PC-9 (cell line): ENCODE measurements at regions of chr22 and their contacts with region 1.

Region 1: DNA sequence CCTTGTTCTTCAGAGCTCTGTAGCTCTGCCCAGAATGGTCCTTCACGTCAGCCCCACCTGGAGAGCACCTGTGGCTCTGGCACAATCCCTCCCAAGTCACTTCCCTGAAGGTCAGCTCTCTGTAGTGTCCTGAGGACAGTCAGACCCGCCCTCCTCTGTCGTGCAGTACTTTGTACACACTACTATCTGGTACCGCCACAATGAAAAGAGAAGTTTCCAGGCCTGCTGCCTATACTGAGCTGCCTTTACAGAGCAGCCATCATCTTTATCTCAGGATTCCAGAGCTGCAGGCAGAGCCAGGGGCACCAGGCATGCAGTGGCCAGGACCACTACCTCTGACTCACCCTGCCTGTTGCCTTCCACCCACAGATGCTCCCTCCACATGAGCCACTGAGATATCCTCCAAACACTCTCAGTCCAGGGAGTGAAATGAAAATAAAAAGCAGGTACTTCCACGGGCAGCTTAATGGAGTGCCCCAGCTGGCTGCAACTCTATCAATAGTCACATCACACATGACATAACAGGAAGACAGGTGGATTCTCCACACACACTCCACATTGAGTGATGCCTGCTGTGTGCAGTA is 7.3 kb downstream of the PACSIN2 start:
- DNase-seq: no peak
- H3K4me3 ChIP-seq: no peak overlapping the region
- H3K27ac ChIP-seq: no peak overlapping the region
- H3K4me1 ChIP-seq: peaks cover 83% of the 10 kb centered on the region
- H3K27me3 ChIP-seq: no peaks in the 10 kb centered on the region
- CTCF ChIP-seq: no peak

Region 2: DNA sequence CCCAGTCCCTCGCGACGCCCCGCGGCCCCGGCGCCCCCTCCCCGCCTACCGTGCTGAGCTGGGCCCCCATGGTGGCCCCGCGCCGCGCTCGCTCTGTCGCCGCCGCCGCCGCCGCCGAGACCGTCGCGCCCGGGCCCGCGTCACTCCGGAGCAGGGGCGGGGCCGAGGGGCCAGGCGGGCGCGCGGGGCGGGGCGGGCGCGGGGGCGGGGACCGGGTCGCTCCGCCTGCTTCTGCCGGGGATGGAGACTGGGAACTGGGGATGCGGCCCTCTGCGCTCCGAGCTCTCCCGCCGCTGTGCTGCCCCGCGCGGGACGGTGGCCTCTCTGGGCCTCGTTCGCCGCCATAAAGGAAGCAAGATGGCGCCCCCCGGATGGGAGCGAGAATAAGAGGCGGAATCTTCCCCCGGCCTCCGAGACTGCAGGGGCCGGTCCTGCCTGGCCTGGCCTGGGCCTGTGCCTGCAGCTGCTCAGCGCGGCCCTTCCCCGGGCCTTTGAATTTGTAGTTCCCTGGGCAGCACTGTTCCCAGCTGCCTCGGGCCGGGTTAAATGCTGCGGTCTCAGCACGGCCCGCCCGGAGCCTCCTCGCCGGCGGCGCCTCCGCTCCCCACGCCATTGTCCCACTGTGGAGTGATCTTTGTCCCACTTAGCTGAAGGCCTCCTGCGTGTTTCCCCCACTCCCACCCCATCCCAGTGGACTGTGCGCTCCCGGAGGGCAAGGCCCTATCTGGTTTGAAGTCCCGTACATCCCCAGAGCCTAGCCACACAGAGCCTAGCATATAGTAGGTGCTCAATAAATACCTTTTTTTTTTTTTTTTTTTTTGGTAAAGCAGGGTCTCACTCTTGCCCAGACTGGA is 358.1 kb before region 1 on chr22 and contains the start of gene CYB5R3:
- CTCF ChIA-PET with region 1: no interaction called
- POLR2A ChIA-PET with region 1: interaction called, 16 read pairs
- intact Hi-C with region 1: no loop called
- DNase-seq: peak; percentile 40 to 70
- H3K4me3 ChIP-seq: peak within 1 kb of the TSS; percentile 100
- H3K27ac ChIP-seq: no peak within 1 kb of the TSS
- H3K4me1 ChIP-seq: peaks cover 31% of the 10 kb centered on the region
- H3K27me3 ChIP-seq: no peaks in the 10 kb centered on the region
- CTCF ChIP-seq: no peak
- total RNA-seq, gene CYB5R3: 97.6 and 106 TPM in 2 replicates

Region 3: GRCh38 chr22:42910221-42910942 is 97.2 kb before region 1 on chr22:
- CTCF ChIA-PET with region 1: no interaction called
- POLR2A ChIA-PET with region 1: no interaction called
- intact Hi-C with region 1: no loop called
- DNase-seq: no peak
- H3K4me3 ChIP-seq: no peak overlapping the region
- H3K27ac ChIP-seq: no peak overlapping the region
- H3K4me1 ChIP-seq: no peaks in the 10 kb centered on the region
- H3K27me3 ChIP-seq: no peaks in the 10 kb centered on the region
- CTCF ChIP-seq: no peak

Region 4: GRCh38 chr22:43088979-43089717 is 81.5 kb after region 1 on chr22 and contains the start of gene TTLL1:
- CTCF ChIA-PET with region 1: no interaction called
- POLR2A ChIA-PET with region 1: no interaction called
- intact Hi-C with region 1: loop called (anchors 1 kb)
- DNase-seq: peak; percentile 85 to 96
- H3K4me3 ChIP-seq: peak within 1 kb of the TSS; percentile 93
- H3K27ac ChIP-seq: peak within 1 kb of the TSS; percentile 70
- H3K4me1 ChIP-seq: peaks cover 7% of the 10 kb centered on the region
- H3K27me3 ChIP-seq: no peaks in the 10 kb centered on the region
- CTCF ChIP-seq: no peak; the same call in 1 of the 2 replicates
- total RNA-seq, gene TTLL1: 7.8 and 11.2 TPM in 2 replicates

Region 5: GRCh38 chr22:43142880-43143562 is 135.4 kb after region 1 on chr22 and contains the start of gene MCAT:
- CTCF ChIA-PET with region 1: no interaction called
- POLR2A ChIA-PET with region 1: interaction called, 10 read pairs
- intact Hi-C with region 1: no loop called
- DNase-seq: peak; percentile 67 to 78
- H3K4me3 ChIP-seq: peak within 1 kb of the TSS; percentile 82
- H3K27ac ChIP-seq: peak within 1 kb of the TSS; percentile 35
- H3K4me1 ChIP-seq: peaks cover 19% of the 10 kb centered on the region
- H3K27me3 ChIP-seq: no peaks in the 10 kb centered on the region
- CTCF ChIP-seq: no peak
- total RNA-seq, gene MCAT: 31.4 and 35.5 TPM in 2 replicates

Region 6: GRCh38 chr22:43580351-43580750 is 572.7 kb after region 1 on chr22:
- CTCF ChIA-PET with region 1: no interaction called
- POLR2A ChIA-PET with region 1: no interaction called
- intact Hi-C with region 1: no loop called
- DNase-seq: no peak
- H3K4me3 ChIP-seq: no peak overlapping the region
- H3K27ac ChIP-seq: no peak overlapping the region
- H3K4me1 ChIP-seq: no peaks in the 10 kb centered on the region
- H3K27me3 ChIP-seq: peaks cover 61% of the 10 kb centered on the region
- CTCF ChIP-seq: no peak